ENCODE measurements at regions of chr11 and their contacts with region 1.

Region 1: GRCh38 chr11:44538375-44539054 is 26.9 kb upstream of the CD82 start:
- DNase-seq: peak; percentile 63 to 90 (median 80)
- H3K4me3 ChIP-seq: no peak overlapping the region
- H3K27ac ChIP-seq: no peak overlapping the region
- H3K4me1 ChIP-seq: no peaks in the 10 kb centered on the region
- H3K27me3 ChIP-seq: no peaks in the 10 kb centered on the region
- CTCF ChIP-seq: peak; percentile 90 to 98 (median 96)
- POLR2A ChIP-seq: no peak

Region 2: DNA sequence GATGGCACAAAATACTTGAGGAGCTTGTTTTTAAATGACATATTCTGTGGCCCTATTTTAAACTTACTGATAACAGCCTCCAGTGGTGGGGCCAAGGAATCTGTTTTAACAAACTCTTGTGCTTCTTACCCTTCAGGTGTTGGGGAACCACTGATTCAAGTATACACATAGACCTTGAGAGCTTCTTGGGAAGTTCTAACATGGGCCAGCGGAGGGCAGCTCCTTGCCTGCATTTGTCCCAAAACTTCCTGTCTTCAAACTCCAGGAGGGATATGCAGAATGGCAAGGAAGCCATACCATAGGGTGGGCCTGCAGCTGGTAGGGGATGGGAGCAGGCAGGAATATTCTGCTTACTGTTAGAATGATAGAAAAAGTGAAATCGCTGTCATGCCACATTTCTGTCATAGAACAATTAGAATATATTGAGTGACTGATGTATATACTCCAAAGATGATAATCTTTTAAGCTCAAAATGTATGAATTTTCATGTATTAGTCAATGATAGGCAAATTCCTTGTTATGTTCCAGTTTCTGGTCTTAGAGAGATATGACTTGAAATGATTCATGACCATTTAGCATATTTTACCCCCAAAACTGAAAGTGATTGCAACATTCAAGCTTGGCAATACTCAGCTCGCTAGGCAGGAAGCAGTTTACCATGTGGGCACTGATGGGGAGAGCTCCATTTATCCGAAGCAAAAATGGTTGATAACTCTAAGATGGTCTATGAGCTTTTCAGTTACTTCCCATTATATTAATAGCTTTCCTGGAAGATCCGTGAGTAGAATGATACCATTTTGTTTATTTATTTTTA is 433.8 kb before region 1 on chr11:
- intact Hi-C with region 1: loop called in 1 of 2 experiments (anchors 10 kb)
- DNase-seq: no peak
- H3K4me3 ChIP-seq: no peak overlapping the region
- H3K27ac ChIP-seq: no peak overlapping the region
- H3K4me1 ChIP-seq: no peaks in the 10 kb centered on the region
- H3K27me3 ChIP-seq: no peaks in the 10 kb centered on the region
- CTCF ChIP-seq: no peak
- POLR2A ChIP-seq: no peak

Region 3: DNA sequence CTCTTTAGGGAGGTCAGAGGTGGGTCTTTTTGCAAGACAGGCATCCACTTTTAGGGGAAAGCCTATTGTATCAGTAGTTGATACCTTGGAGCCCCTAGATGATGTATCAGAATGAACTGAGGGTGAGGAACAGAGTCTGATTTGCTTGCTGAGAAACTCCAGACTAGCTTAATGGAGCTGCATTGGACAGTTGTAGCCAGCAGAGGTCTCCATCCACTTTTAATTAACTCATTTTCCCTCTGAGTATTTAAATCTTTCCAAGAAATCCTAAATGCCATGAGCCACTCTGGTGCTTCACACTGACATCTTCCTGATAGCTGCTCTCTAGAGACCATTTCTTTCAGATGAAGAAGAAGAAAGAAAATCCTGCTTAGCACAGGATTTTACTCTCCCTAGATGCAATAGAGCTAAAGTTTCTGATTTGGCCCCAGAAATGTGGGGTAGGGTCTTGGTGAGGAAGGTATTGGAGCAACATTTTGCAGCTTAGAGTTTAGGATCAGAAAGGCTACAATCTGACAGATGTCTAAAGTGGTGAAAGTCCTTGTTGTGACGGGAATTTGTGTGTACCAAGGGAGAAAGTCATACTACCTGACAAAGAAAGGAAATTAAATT is 405.1 kb before region 1 on chr11:
- intact Hi-C with region 1: loop called in 1 of 2 experiments (anchors 5 kb)
- DNase-seq: peak in 2 of 7 donors; percentile 20 to 22
- H3K4me3 ChIP-seq: no peak overlapping the region
- H3K27ac ChIP-seq: no peak overlapping the region
- H3K4me1 ChIP-seq: peaks cover 1 to 4% of the 10 kb centered on the region in 2 donors
- H3K27me3 ChIP-seq: no peaks in the 10 kb centered on the region
- CTCF ChIP-seq: peak; percentile 27 to 57 (median 51)
- POLR2A ChIP-seq: no peak

Region 4: DNA sequence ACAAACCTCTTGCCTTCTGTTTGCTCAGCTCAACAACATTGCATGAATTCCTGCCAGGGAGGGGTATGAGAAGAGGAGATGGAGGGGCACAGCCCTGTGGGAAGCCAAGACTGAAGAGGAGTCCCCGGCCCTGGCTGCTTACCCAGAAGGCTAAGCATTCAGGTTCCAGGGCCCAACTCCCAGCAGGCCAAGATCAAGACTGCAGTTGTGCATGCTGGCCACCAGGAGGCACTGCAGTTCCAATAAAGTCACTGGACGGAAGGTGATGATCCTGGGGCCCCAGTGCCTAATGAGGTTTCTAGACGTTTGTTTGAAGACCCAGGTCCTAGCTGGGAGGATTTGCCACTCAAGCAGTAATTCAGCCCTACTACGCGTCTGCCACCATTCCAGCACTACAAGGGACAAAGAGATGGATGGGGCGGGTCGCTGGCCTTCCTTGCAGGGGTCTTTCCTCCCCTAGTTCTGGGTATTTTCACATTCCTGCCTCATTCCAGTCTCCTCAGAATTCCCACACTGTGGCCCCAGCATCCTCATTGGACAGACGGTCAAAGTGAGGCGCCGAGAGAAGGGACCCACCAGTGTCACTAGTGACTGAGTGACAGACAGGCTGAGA is 252.1 kb before region 1 on chr11:
- intact Hi-C with region 1: loop called (anchors 2 to 5 kb)
- DNase-seq: peak; percentile 35 to 64 (median 51)
- H3K4me3 ChIP-seq: no peak overlapping the region
- H3K27ac ChIP-seq: no peak overlapping the region
- H3K4me1 ChIP-seq: no peaks in the 10 kb centered on the region
- H3K27me3 ChIP-seq: no peaks in the 10 kb centered on the region
- CTCF ChIP-seq: peak; percentile 86 to 95 (median 92)
- POLR2A ChIP-seq: no peak